Heart right ventricle (tissue), 16 donors: ENCODE measurements at regions of chr18 and their contacts with region 1.

Region 1: DNA sequence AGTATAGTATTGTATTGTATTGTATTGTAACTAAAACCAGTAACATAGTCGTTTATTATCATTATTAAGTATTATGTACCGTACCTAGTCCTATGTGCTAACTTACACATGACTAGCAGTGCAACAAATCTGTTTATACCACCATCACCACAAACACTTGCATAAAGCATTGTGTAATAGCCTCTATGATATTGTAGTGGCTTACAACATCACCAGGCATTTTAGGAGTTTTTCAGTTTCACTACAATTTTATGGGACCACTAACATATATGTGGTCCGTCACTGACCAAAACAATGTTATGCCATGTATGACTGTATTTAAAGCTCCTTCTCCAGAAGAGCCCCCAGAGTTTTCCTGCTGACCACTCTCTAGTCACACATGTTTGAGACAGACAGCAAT is 306.2 kb downstream of the SETBP1 start:
- DNase-seq: no peak
- ATAC-seq: no peak
- H3K4me3 ChIP-seq: no peak overlapping the region
- H3K27ac ChIP-seq: no peak overlapping the region
- H3K4me1 ChIP-seq: no peaks in the 10 kb centered on the region
- H3K27me3 ChIP-seq: no peaks in the 10 kb centered on the region
- CTCF ChIP-seq: no peak

Region 2: GRCh38 chr18:44709307-44710126 is 277.4 kb before region 1 on chr18:
- intact Hi-C with region 1: no loop called
- DNase-seq: no peak
- ATAC-seq: peak in 4 of 8 donors; percentile 17 to 34 (median 28)
- H3K4me3 ChIP-seq: no peak overlapping the region
- H3K27ac ChIP-seq: peak overlapping the region in 7 of 10 donors; percentile 1 to 72 (median 45)
- H3K4me1 ChIP-seq: peaks cover 0 to 38% (median 23%) of the 10 kb centered on the region in 9 donors
- H3K27me3 ChIP-seq: peaks cover 0 to 41% (median 0%) of the 10 kb centered on the region in 7 donors
- CTCF ChIP-seq: no peak

Region 3: DNA sequence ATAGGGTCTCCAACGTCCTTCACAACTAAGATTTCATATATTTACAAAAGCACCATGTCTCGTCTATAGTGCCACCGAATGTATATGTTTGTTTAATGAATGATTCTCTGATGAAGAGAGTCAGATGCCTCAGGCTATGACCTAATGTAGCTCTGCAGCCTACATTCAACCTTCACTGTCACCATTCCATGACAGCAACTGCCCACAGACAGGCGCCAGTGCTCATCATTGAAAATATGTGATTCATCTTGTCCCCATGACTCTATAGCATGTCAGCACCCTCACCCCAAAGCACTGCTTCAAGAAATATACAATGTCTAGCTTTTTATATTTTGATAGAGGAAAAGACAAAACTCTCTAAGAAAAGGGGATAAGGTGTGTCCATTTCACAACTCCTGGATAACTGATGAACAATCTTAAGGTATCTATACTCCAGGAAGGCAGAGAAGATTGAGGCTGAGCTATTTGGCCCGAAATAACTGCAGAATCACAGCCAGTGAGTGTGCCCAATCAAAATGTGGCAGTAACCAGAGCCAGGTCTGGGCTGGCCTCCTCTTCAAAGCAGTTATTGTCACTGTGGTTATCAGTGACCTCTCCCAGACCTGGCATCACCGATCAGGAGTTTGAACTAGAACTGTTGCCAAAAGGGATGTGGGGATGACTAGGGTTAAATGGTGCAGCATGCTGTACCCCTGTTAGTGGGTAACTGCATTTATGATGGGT is 59.6 kb before region 1 on chr18:
- intact Hi-C with region 1: loop called in 1 of 10 experiments (anchors 10 kb)
- DNase-seq: no peak
- ATAC-seq: no peak
- H3K4me3 ChIP-seq: no peak overlapping the region
- H3K27ac ChIP-seq: no peak overlapping the region
- H3K4me1 ChIP-seq: peaks cover 0 to 14% (median 0%) of the 10 kb centered on the region in 9 donors
- H3K27me3 ChIP-seq: no peaks in the 10 kb centered on the region
- CTCF ChIP-seq: no peak